B cell (primary cell): ENCODE measurements at regions of chr5 and their contacts with region 1.

Region 1: DNA sequence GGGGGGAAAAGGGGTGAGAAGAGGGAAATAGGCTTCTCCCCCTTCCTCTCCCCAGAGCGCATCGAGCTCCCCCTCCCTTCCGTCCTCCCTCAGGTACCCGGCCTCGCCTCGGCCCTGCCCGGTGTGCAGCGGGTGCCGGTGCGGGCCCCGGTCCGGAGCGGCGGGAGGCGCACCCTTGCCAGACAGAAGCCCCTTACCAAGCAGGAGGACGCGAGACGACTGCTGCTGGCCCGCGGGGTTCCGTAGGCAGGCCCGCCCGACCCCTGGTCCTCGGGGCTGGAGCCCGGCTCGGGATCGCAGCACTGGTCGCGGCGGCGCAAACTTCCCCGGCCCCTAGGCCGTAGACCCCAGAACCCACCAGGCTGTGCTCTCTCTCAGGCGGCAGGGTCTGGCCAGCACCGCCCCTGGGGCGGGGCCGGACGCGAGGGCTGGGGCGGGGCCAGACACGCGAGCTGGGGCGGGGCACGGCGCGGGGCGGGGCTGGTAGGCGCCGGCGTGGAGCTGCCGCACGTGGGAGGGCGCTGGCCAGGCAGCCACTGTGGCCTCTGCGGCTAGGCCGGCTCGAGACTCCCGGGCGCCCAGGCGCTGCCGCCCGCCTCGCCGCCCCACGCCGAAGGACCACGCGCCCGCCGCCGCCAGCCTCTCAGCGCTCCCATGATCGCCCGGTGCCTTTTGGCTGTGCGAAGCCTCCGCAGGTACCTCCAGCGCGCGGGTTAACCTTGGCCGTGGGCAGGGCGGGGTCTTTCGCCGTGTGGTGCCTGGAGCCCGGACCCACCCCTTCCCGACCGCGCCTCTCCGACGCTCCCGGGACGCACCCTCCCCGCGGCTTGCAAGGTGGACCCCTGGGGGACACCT is at the starts of genes NLN and SGTB:
- DNase-seq: peak; percentile 86
- ATAC-seq: peak; percentile 98
- H3K4me3 ChIP-seq: peak within 1 kb of the TSS; percentile 77 to 96 (median 87)
- H3K4me3 Mint-ChIP-seq: peak within 1 kb of the TSS; percentile 91
- H3K27ac ChIP-seq: peak within 1 kb of the TSS; percentile 23 to 83
- H3K27ac Mint-ChIP-seq: peak within 1 kb of the TSS; percentile 83
- H3K4me1 ChIP-seq: peaks cover 12 to 13% of the 10 kb centered on the region in 2 donors
- H3K4me1 Mint-ChIP-seq: peaks cover 24% of the 10 kb centered on the region
- H3K27me3 ChIP-seq: no peaks in the 10 kb centered on the region
- H3K27me3 Mint-ChIP-seq: no peaks in the 10 kb centered on the region
- CTCF ChIP-seq: no peak
- total RNA-seq, gene NLN: 6.8 and 8.4 TPM in 2 replicates
- total RNA-seq, gene SGTB: 5.5 and 7.3 TPM in 2 replicates

Region 2: DNA sequence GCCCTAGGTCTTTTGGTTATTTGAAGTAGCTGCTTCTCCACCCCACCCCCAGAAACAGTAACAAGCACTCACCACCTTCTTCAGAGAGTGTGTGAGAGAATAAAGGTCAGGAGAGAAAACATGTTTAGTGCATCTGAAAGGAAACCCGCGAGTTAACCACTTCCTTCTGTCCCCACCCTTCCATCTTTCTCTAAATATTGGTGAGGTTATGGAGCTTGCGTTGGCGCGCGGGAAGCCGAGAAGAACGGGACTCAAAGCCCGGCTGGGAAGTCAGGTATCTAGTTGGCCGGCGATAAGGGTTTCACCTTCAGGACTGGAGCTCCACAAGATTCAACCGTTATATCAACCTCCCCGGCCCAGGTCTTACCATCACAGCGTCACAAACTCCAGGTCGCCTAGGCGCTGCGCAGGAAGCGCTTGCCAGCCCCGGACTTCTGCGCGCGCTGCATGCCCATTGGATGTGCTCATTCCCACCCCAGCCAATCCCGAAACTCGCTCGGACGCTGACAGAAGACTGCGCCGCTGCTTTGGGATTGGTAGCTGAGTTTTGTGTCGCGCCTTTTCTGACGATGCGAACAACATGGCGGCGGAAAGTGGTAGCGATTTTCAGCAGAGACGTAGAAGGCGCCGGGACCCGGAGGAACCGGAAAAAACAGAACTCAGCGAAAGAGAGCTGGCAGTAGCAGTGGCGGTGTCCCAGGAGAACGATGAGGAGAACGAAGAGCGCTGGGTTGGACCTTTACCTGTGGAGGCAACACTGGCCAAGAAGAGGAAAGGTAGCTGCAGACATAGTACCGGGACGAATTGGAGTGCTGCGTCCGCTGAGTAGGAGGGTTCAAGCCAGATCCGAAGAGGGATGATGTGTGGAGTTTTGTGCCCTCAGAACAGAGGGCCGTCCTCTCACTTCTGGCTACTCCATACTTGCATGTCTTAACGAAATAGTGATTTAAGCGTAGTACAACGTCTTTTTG is 158.9 kb before region 1 on chr5 and contains the starts of genes CENPK and PPWD1:
- CTCF ChIA-PET with region 1: no interaction called
- POLR2A ChIA-PET with region 1: interaction called, 3 read pairs
- intact Hi-C with region 1: loop called (anchors 5 kb)
- DNase-seq: peak; percentile 95
- ATAC-seq: peak; percentile 99
- H3K4me3 ChIP-seq: peak within 1 kb of the TSS; percentile 74 to 97 (median 91)
- H3K4me3 Mint-ChIP-seq: peak within 1 kb of the TSS; percentile 93
- H3K27ac ChIP-seq: peak within 1 kb of the TSS; percentile 89 to 90
- H3K27ac Mint-ChIP-seq: peak within 1 kb of the TSS; percentile 95
- H3K4me1 ChIP-seq: peaks cover 19 to 20% of the 10 kb centered on the region in 2 donors
- H3K4me1 Mint-ChIP-seq: peaks cover 38% of the 10 kb centered on the region
- H3K27me3 ChIP-seq: no peaks in the 10 kb centered on the region
- H3K27me3 Mint-ChIP-seq: no peaks in the 10 kb centered on the region
- CTCF ChIP-seq: no peak
- total RNA-seq, gene CENPK: 18.4 and 21.0 TPM in 2 replicates
- total RNA-seq, gene PPWD1: 89.4 and 91.0 TPM in 2 replicates

Region 3: GRCh38 chr5:65708145-65708544 is 13.8 kb before region 1 on chr5:
- CTCF ChIA-PET with region 1: no interaction called
- POLR2A ChIA-PET with region 1: no interaction called
- intact Hi-C with region 1: no loop called
- DNase-seq: no peak
- ATAC-seq: no peak
- H3K4me3 ChIP-seq: no peak overlapping the region
- H3K4me3 Mint-ChIP-seq: no peak overlapping the region
- H3K27ac ChIP-seq: no peak overlapping the region
- H3K27ac Mint-ChIP-seq: no peak overlapping the region
- H3K4me1 ChIP-seq: no peaks in the 10 kb centered on the region
- H3K4me1 Mint-ChIP-seq: no peaks in the 10 kb centered on the region
- H3K27me3 ChIP-seq: no peaks in the 10 kb centered on the region
- H3K27me3 Mint-ChIP-seq: no peaks in the 10 kb centered on the region
- CTCF ChIP-seq: no peak

Region 4: GRCh38 chr5:65779643-65780042 is 57.7 kb after region 1 on chr5:
- CTCF ChIA-PET with region 1: no interaction called
- POLR2A ChIA-PET with region 1: no interaction called
- intact Hi-C with region 1: no loop called
- DNase-seq: peak; percentile 26
- ATAC-seq: no peak
- H3K4me3 ChIP-seq: no peak overlapping the region
- H3K4me3 Mint-ChIP-seq: no peak overlapping the region
- H3K27ac ChIP-seq: no peak overlapping the region
- H3K27ac Mint-ChIP-seq: no peak overlapping the region
- H3K4me1 ChIP-seq: peaks cover 3 to 5% of the 10 kb centered on the region in 2 donors
- H3K4me1 Mint-ChIP-seq: peaks cover 7% of the 10 kb centered on the region
- H3K27me3 ChIP-seq: no peaks in the 10 kb centered on the region
- H3K27me3 Mint-ChIP-seq: no peaks in the 10 kb centered on the region
- CTCF ChIP-seq: no peak

Region 5: GRCh38 chr5:65825408-65826328 is 103.7 kb after region 1 on chr5:
- CTCF ChIA-PET with region 1: no interaction called
- POLR2A ChIA-PET with region 1: no interaction called
- intact Hi-C with region 1: no loop called
- DNase-seq: peak; percentile 67
- ATAC-seq: peak; percentile 45
- H3K4me3 ChIP-seq: peak overlapping the region in 1 of 5 experiments; percentile 21
- H3K4me3 Mint-ChIP-seq: peak overlapping the region; percentile 35
- H3K27ac ChIP-seq: peak overlapping the region in 1 of 2 donors; percentile 47
- H3K27ac Mint-ChIP-seq: peak overlapping the region; percentile 46
- H3K4me1 ChIP-seq: peaks cover 21 to 26% of the 10 kb centered on the region in 2 donors
- H3K4me1 Mint-ChIP-seq: peaks cover 21% of the 10 kb centered on the region
- H3K27me3 ChIP-seq: no peaks in the 10 kb centered on the region
- H3K27me3 Mint-ChIP-seq: no peaks in the 10 kb centered on the region
- CTCF ChIP-seq: no peak

Region 6: GRCh38 chr5:66010476-66010875 is 288.5 kb after region 1 on chr5:
- CTCF ChIA-PET with region 1: no interaction called
- POLR2A ChIA-PET with region 1: no interaction called
- intact Hi-C with region 1: loop called (anchors 10 kb)
- DNase-seq: peak; percentile 61
- ATAC-seq: peak; percentile 71
- H3K4me3 ChIP-seq: no peak overlapping the region
- H3K4me3 Mint-ChIP-seq: peak overlapping the region; percentile 71
- H3K27ac ChIP-seq: peak overlapping the region; percentile 1 to 66
- H3K27ac Mint-ChIP-seq: peak overlapping the region; percentile 91
- H3K4me1 ChIP-seq: peaks cover 15 to 28% of the 10 kb centered on the region in 2 donors
- H3K4me1 Mint-ChIP-seq: peaks cover 44% of the 10 kb centered on the region
- H3K27me3 ChIP-seq: no peaks in the 10 kb centered on the region
- H3K27me3 Mint-ChIP-seq: no peaks in the 10 kb centered on the region
- CTCF ChIP-seq: no peak

Region 7: DNA sequence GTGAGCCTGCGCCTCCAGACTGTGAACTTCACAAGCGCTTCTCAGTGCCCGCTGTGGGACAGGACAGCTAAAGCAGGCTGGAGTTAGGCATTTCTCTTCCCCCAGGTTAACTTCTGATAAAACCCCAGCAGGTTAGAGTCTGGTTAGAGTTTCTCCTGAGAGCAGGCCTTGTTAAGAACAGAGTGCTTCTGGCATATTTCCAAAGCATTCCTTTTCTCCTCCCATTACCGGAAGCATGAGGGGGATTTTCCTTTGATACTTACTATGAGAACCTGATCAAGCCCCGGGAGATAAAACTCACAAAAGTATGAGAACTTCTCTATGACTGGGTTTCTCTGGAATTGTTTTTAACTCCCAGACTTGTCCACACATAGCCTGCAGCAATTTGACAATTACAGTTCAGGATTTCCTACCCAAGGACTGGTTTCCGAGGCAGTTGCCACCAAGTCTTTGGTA is 796.8 kb after region 1 on chr5:
- CTCF ChIA-PET with region 1: no interaction called
- POLR2A ChIA-PET with region 1: no interaction called
- intact Hi-C with region 1: loop called (anchors 10 kb)
- DNase-seq: no peak
- ATAC-seq: no peak
- H3K4me3 ChIP-seq: no peak overlapping the region
- H3K4me3 Mint-ChIP-seq: no peak overlapping the region
- H3K27ac ChIP-seq: no peak overlapping the region
- H3K27ac Mint-ChIP-seq: no peak overlapping the region
- H3K4me1 ChIP-seq: peaks cover 35 to 36% of the 10 kb centered on the region in 2 donors
- H3K4me1 Mint-ChIP-seq: peaks cover 39% of the 10 kb centered on the region
- H3K27me3 ChIP-seq: no peaks in the 10 kb centered on the region
- H3K27me3 Mint-ChIP-seq: no peaks in the 10 kb centered on the region
- CTCF ChIP-seq: no peak